ENCODE measurements at regions of chr2 and their contacts with region 1.

Region 1: DNA sequence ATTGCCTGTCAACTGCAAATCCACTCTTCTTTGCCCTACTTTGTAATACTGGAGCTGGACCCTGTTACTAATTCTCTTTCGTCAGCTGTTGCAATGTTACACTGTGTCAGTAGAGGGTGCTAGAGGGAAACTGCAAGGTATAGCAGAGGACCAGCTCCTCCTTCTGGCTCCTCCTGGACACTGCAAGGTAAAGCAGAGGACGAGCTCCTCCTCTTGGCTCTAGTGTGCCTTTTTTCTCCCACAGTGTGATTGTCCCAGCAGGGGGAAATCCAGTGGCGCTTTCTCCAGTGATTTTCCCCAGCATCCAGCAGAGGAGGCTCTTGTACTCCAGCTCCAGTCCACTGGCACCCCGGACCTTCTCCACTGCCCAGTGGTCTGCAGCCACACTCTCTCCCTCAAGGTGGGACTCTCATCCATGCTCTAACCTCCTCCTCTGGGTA is 95.6 kb downstream of the CAPN13 start:
- DNase-seq: peak; percentile 85
- ATAC-seq: peak; percentile 85
- H3K4me3 ChIP-seq: no peak overlapping the region
- H3K27ac ChIP-seq: no peak overlapping the region
- H3K4me1 ChIP-seq: no peaks in the 10 kb centered on the region
- H3K27me3 ChIP-seq: no peaks in the 10 kb centered on the region
- CTCF ChIP-seq: peak; percentile 99 to 100 (median 99)
- POLR2A ChIP-seq: no peak
- RAD21 ChIP-seq: peak; percentile 92

Region 2: DNA sequence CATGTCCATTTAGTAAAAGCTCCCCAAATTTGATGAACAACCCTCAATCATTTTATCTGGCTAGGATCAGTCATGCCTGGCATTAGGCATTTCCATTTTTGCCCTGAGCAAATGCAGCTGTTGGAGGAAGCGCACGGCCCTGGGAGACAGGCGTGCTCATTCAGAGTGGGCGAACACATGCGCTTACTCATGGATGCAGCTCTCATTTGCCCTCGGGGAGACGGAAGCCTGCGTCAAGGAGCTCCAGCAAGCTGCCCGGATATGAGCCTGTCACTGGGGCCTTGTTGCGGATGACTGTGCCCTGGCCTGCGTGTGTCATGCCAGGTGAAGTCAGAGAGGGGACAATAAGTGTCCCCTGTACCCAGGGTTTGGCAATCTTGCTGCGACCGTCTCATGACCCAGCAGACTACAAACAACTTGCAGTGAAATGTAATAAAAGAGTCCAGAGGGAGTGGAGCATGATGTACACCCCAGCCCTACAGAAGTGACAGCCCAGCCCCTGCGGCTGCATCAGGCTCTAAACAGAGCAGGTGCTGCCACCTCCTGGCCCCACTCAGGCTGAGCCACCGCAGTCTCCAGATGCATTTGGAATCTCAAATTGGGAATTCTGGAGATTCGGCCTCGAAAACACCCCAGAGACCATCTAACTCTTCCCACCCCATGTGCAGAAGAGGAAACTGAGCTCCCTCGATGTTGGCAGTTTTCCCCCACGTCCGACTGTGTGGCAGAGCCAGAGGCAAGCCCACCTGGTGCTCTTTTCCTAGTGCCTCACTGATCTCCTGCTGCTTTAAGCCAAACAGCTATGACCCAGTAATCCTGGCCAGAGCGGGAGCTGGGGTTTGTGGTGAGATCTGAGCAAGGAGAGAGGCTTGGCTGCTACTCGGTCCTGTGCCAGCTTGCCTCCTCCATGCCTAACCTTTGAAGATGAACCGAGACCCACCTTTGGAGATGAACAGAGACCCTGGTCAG is 685.3 kb before region 1 on chr2:
- CTCF ChIA-PET with region 1: no interaction called
- POLR2A ChIA-PET with region 1: no interaction called
- RAD21 ChIA-PET with region 1: interaction called in 1 of 2 experiments, 10 read pairs
- intact Hi-C with region 1: no loop called
- DNase-seq: peak; percentile 4
- ATAC-seq: peak; percentile 92
- H3K4me3 ChIP-seq: no peak overlapping the region
- H3K27ac ChIP-seq: no peak overlapping the region
- H3K4me1 ChIP-seq: no peaks in the 10 kb centered on the region
- H3K27me3 ChIP-seq: peaks cover 67% of the 10 kb centered on the region
- CTCF ChIP-seq: peak; percentile 44 to 84 (median 82); a peak in 5 of 6 replicates
- POLR2A ChIP-seq: no peak
- RAD21 ChIP-seq: peak; percentile 75

Region 3: DNA sequence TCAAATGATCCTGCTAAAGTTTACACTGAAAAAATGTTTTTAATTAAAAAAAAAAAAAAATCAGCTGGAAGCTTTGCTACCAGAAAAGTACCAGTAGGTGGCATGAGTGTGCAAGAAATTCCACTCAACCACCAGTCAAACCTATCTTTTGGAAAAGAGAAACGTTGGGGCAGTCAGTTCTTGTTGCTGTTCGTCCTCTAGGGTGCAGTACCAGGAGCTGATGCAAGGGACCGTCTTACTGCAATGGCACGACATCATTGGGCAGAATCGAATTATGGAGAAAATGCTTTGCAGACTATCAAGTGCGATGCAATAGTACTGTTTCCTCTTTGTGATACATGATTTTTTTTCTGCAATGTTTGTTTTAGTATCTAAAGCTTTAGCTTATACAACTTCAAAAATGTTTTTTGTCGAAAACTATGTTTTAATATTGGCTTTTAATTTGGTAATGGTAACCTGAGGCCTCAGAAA is 546.6 kb before region 1 on chr2:
- CTCF ChIA-PET with region 1: interaction called, 152 read pairs
- POLR2A ChIA-PET with region 1: interaction called, 8 read pairs
- RAD21 ChIA-PET with region 1: interaction called, 7 to 19 read pairs
- intact Hi-C with region 1: loop called (anchors 1 kb)
- DNase-seq: peak; percentile 91
- ATAC-seq: peak; percentile 100
- H3K4me3 ChIP-seq: no peak overlapping the region
- H3K27ac ChIP-seq: no peak overlapping the region
- H3K4me1 ChIP-seq: peaks cover 0 to 6% of the 10 kb centered on the region in 2 experiments; a peak in 1 of 4 replicates
- H3K27me3 ChIP-seq: no peaks in the 10 kb centered on the region
- CTCF ChIP-seq: peak; percentile 80 to 99 (median 90)
- POLR2A ChIP-seq: no peak
- RAD21 ChIP-seq: peak; percentile 92

Region 4: DNA sequence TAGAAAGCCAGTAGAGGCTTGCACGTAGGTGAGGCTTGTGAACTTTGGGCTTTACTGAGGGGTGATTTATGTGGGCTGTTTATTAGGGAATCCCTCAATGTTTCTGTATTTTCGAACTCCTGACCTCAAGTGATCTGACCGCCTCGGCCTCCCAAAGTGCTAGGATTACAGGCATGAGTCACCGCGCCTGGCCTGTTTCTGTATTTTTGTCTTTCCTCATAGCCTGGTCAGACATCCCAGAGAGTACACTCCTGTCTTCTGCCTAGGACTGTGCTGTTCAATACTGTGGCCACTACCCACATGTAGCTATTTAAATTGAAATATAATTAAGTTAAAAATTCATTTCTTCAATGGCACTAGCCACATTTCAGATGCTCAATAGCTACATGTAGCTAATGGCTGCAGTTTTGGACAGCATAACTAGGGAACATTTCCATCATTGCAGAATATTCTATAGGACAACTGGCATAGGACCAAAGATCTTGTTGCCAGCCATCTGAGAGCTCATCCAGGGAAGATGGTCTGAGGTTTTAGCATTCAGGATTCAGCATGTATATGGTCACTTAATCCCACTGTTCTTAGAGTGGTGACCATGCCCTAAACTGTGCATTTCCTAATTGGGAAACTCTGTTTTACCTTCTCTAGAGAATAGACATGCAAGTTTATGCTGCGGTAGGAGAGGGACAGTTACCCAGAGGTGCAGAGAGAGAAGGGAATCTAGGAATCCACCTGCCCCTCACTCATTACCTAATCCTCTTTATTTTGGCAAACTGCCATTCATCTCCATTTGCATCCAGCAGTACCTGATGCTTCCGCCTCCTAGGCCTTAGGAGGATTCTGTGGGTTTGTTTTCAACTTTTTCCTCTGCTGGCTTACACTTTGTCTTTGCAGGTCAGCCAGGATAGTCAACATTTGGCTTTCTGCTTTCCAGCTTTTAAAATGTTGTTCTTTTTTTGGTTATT is 200.3 kb before region 1 on chr2:
- CTCF ChIA-PET with region 1: no interaction called
- POLR2A ChIA-PET with region 1: no interaction called
- RAD21 ChIA-PET with region 1: no interaction called
- intact Hi-C with region 1: no loop called
- DNase-seq: peak; percentile 57
- ATAC-seq: peak; percentile 94
- H3K4me3 ChIP-seq: peak overlapping the region in 1 of 2 experiments; percentile 11; a peak in 2 of 4 replicates
- H3K27ac ChIP-seq: peak overlapping the region; percentile 23; the same call in 1 of the 2 replicates
- H3K4me1 ChIP-seq: peaks cover 45 to 55% of the 10 kb centered on the region in 2 experiments
- H3K27me3 ChIP-seq: no peaks in the 10 kb centered on the region
- CTCF ChIP-seq: no peak
- POLR2A ChIP-seq: no peak
- RAD21 ChIP-seq: no peak

Region 5: GRCh38 chr2:30807249-30807648 is 95.6 kb after region 1 on chr2 and contains the start of gene CAPN13:
- CTCF ChIA-PET with region 1: no interaction called
- POLR2A ChIA-PET with region 1: no interaction called
- RAD21 ChIA-PET with region 1: no interaction called
- intact Hi-C with region 1: no loop called
- DNase-seq: peak; percentile 32
- ATAC-seq: peak; percentile 95
- H3K4me3 ChIP-seq: no peak within 1 kb of the TSS
- H3K27ac ChIP-seq: no peak within 1 kb of the TSS
- H3K4me1 ChIP-seq: peaks cover 0 to 6% of the 10 kb centered on the region in 2 experiments; a peak in 2 of 4 replicates
- H3K27me3 ChIP-seq: peaks cover 17% of the 10 kb centered on the region; the same call in 1 of the 2 replicates
- CTCF ChIP-seq: no peak
- POLR2A ChIP-seq: no peak
- RAD21 ChIP-seq: no peak
- total RNA-seq, gene CAPN13: 0.25 TPM

Region 6: GRCh38 chr2:30862054-30862651 is 150.5 kb after region 1 on chr2:
- CTCF ChIA-PET with region 1: interaction called, 27 read pairs
- POLR2A ChIA-PET with region 1: no interaction called
- RAD21 ChIA-PET with region 1: no interaction called
- intact Hi-C with region 1: loop called (anchors 1 kb)
- DNase-seq: peak; percentile 55
- ATAC-seq: peak; percentile 55
- H3K4me3 ChIP-seq: no peak overlapping the region
- H3K27ac ChIP-seq: no peak overlapping the region
- H3K4me1 ChIP-seq: no peaks in the 10 kb centered on the region
- H3K27me3 ChIP-seq: peaks cover 6% of the 10 kb centered on the region; the same call in 1 of the 2 replicates
- CTCF ChIP-seq: peak; percentile 52 to 99 (median 77)
- POLR2A ChIP-seq: no peak
- RAD21 ChIP-seq: peak; percentile 67

Region 7: GRCh38 chr2:31333527-31334183 is 622.0 kb after region 1 on chr2:
- CTCF ChIA-PET with region 1: interaction called, 23 read pairs
- POLR2A ChIA-PET with region 1: no interaction called
- RAD21 ChIA-PET with region 1: interaction called in 1 of 2 experiments, 3 read pairs
- intact Hi-C with region 1: loop called (anchors 1 kb)
- DNase-seq: peak; percentile 54
- ATAC-seq: peak; percentile 89
- H3K4me3 ChIP-seq: no peak overlapping the region
- H3K27ac ChIP-seq: no peak overlapping the region
- H3K4me1 ChIP-seq: no peaks in the 10 kb centered on the region
- H3K27me3 ChIP-seq: peaks cover 16% of the 10 kb centered on the region; the same call in 1 of the 2 replicates
- CTCF ChIP-seq: peak; percentile 88 to 95 (median 94)
- POLR2A ChIP-seq: no peak
- RAD21 ChIP-seq: peak; percentile 93

Region 8: DNA sequence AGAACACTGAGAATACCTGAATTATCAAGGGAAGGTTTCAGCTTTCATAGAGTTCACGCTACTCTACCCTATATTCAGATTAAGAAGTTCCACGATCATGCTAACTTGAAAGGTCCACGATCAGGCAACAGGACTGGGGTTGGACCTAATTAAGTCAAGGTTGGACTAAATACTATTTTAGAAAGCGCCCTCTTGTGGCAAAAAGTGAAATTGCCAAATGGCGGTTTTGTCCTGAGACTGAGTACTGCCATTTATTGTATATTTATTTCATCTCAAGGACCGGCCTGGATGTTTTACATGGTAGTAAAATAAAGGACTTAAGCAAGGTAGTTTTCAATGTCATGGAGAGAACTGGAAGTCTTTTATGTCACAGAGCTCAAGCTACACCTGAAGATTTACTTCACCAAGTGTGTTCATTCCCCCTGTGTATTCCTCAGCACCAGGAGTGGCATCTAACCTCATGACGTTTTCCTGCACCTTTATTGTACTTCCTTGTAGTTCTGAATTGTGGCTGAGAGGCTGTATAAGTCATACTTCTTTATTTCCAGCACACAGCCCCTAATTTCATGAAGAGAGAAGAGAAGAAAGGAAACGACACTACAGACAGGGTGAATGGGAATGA is 812.3 kb after region 1 on chr2:
- CTCF ChIA-PET with region 1: no interaction called
- POLR2A ChIA-PET with region 1: no interaction called
- RAD21 ChIA-PET with region 1: no interaction called
- intact Hi-C with region 1: loop called (anchors 1 kb)
- DNase-seq: peak; percentile 48
- ATAC-seq: peak; percentile 93
- H3K4me3 ChIP-seq: no peak overlapping the region
- H3K27ac ChIP-seq: no peak overlapping the region
- H3K4me1 ChIP-seq: no peaks in the 10 kb centered on the region
- H3K27me3 ChIP-seq: peaks cover 41% of the 10 kb centered on the region
- CTCF ChIP-seq: peak; percentile 45 to 85 (median 66)
- POLR2A ChIP-seq: no peak
- RAD21 ChIP-seq: peak; percentile 51

Measured in HCT116 (cell line).